CD4-positive, alpha-beta memory T cell (primary cell): ENCODE measurements at regions of chr16 and their contacts with region 1.

Region 1: DNA sequence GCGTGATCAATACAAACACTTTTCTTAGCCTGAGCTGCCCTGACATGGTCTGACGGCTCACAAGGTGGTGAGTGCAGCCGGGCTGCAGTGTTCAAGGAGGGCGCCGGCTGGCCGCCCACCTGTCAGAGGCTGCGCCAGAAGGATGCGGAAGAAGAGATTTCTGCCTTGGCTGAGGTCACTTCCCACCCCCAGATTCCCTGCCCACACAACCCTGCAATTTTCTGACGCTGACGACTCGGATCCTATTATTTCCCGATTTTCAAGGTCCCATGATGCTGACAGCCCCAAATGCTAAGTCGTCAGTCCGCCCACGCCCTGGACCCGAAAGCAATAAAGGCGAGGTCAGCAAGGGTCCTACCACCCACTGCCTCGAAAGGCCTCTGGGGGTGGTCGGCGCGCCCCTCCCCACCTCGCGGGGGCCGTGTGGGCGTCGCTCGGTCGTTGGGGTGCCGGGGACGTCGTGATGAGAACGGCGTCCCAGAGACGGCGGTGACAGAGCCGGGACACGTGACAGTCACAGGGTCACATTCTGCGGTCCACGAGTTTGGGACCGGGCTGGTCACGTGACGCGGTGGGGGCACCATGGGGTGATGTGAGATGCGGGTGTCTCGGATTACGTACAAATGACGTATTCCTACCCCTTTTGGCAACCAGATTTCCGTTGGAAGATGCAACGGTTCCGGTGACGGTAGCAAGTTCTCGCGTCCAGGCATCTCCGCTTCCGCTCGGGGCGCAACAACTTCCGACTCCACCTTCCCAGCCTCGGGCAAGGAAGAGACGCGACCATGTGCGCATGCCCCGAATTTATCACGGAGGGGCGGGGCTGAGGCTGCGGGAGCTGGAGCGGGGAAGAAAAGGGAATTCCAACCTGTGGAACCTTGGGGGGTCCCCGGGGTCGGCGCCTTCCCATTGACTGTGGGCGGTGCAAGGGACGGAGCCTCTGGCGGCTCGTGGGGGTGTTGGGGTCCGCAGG is at the start of gene STX4:
- DNase-seq: peak; percentile 95 to 100 (median 98)
- H3K4me3 ChIP-seq: peak within 1 kb of the TSS; percentile 83 to 97
- H3K4me3 Mint-ChIP-seq: peak within 1 kb of the TSS; percentile 91 to 98 (median 95)
- H3K27ac ChIP-seq: peak within 1 kb of the TSS; percentile 86
- H3K27ac Mint-ChIP-seq: peak within 1 kb of the TSS; percentile 93 to 98 (median 98)
- H3K4me1 ChIP-seq: peaks cover 24% of the 10 kb centered on the region
- H3K4me1 Mint-ChIP-seq: peaks cover 6 to 38% (median 22%) of the 10 kb centered on the region in 4 donors
- H3K27me3 ChIP-seq: no peaks in the 10 kb centered on the region
- H3K27me3 Mint-ChIP-seq: no peaks in the 10 kb centered on the region
- total RNA-seq, gene STX4: 106 to 111 TPM

Region 2: DNA sequence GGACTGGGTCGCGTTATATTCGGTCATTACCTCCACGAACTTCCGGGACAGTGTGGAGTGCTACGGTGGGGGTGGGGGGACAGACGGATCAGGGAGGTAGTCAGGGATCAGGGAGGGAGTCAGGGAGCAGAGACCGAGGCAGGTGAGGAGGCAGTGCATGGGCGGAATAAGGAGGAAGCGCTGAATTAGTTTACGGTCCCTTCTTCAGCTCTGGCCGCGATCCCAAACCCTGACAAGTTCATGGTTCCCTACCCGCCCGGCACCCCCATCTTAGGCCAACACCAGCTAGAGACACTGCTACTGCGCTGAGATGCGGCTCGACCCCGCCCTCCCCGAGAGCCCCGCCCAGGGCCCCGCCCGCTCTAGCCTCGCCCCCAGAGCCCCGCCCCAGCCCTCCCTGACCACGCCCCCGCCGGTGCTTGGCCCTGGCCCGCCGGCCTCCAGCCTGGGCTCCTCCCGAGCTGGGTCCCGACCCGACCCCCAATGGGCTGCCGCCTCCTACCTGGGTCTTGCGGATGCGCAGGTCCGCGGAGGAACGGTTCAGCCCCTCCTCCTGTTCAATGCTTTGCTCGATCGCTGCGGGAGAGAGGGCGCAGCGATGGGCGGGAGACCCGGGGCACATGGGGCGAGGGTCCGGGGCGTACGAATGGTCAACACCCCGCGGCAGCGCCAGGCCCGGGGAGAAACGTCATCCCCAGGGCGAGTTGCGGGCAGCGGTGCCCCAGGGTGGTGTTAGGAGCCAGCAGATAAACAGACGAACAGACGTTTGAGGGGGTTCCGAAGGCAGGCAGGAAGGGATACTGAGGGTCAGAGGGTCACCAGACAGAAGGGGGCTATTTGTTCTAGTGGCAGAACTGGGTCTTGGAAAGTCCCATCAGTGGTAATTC is 35.8 kb before region 1 on chr16:
- CTCF ChIA-PET with region 1: no interaction called
- POLR2A ChIA-PET with region 1: interaction called, 3 read pairs
- intact Hi-C with region 1: loop called (anchors 1 kb)
- DNase-seq: peak; percentile 59 to 82 (median 66)
- H3K4me3 ChIP-seq: peak overlapping the region; percentile 60 to 69
- H3K4me3 Mint-ChIP-seq: peak overlapping the region; percentile 67 to 86 (median 82)
- H3K27ac ChIP-seq: peak overlapping the region; percentile 47
- H3K27ac Mint-ChIP-seq: peak overlapping the region in 6 of 7 donors; percentile 54 to 89 (median 85)
- H3K4me1 ChIP-seq: peaks cover 11% of the 10 kb centered on the region
- H3K4me1 Mint-ChIP-seq: peaks cover 2 to 6% (median 4%) of the 10 kb centered on the region in 4 donors
- H3K27me3 ChIP-seq: no peaks in the 10 kb centered on the region
- H3K27me3 Mint-ChIP-seq: no peaks in the 10 kb centered on the region

Region 3: DNA sequence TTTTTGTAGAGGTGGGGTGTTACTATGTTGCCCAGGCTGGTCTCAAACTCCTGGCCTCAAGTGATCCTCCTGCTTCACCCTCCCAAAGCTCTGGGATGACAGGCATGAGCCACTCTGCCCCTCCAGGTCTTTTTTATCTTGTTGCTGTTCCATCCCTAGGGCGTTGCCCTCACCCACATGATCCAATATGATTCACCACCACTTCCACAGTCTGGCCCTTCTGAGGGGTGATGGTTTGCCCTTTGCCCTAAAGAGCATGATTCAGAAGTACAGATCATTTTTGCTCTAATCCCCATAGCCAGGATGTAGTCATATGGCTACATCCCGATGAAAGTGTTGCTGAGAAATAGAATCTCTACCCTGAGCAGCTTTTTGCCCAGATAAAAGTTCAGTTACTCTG is 19.1 kb after region 1 on chr16:
- CTCF ChIA-PET with region 1: no interaction called
- POLR2A ChIA-PET with region 1: no interaction called
- intact Hi-C with region 1: no loop called
- DNase-seq: no peak
- H3K4me3 ChIP-seq: no peak overlapping the region
- H3K4me3 Mint-ChIP-seq: no peak overlapping the region
- H3K27ac ChIP-seq: no peak overlapping the region
- H3K27ac Mint-ChIP-seq: no peak overlapping the region
- H3K4me1 ChIP-seq: no peaks in the 10 kb centered on the region
- H3K4me1 Mint-ChIP-seq: peaks cover 0 to 2% (median 0%) of the 10 kb centered on the region in 4 donors
- H3K27me3 ChIP-seq: no peaks in the 10 kb centered on the region
- H3K27me3 Mint-ChIP-seq: no peaks in the 10 kb centered on the region

Region 4: DNA sequence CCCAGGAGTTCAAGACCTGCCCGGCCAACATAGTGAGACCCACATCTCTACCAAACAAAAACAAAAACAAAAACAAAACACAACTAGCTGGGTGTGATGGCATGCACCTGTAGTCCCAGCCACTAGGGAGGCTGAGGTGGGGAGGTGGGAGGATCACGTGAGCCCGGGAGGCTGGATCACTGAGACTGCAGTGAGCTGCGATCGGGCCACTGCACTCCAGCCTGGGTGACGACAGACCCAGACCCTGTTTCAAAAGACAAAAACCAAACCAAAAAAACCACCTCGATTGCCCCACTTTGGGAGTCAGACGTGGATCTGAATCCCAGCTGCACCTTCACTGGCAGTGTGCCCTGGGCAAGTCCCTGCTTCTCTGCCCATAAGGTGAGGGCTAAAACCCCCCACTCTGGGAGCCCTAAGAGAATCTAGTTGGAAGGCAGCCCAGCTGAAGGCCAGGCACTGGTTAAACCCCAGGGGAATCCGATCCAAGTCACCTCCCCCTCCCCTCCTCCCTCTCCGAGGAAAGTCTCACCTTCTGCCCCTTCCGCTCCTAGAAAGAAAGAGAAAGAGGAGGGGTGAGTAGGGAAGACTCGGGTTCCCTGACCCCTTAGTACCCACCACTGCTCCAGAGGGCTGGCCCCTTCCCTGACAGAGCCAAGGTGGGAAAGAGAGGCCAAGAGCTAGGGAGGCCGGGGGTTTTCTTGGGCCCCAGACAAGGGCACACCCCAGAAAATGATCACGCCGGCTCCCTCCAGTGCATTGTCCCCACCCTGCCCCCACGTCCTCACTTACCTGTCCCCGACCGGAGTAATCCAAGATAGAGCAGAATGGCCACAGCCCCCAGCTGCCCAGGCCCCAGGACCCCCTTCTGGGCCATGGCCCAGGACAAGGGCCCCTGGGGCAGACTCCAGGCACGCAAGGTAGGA is 101.9 kb after region 1 on chr16:
- CTCF ChIA-PET with region 1: no interaction called
- POLR2A ChIA-PET with region 1: no interaction called
- intact Hi-C with region 1: no loop called
- DNase-seq: no peak
- H3K4me3 ChIP-seq: no peak overlapping the region
- H3K4me3 Mint-ChIP-seq: no peak overlapping the region
- H3K27ac ChIP-seq: no peak overlapping the region
- H3K27ac Mint-ChIP-seq: no peak overlapping the region
- H3K4me1 ChIP-seq: no peaks in the 10 kb centered on the region
- H3K4me1 Mint-ChIP-seq: peaks cover 0 to 3% (median 0%) of the 10 kb centered on the region in 4 donors
- H3K27me3 ChIP-seq: no peaks in the 10 kb centered on the region
- H3K27me3 Mint-ChIP-seq: no peaks in the 10 kb centered on the region